B cell (primary cell): ENCODE measurements at regions of chr1 and their contacts with region 1.

Region 1: GRCh38 chr1:31789259-31790065 is 25.3 kb upstream of the ADGRB2 start:
- DNase-seq: peak; percentile 93
- ATAC-seq: peak; percentile 76
- H3K4me3 ChIP-seq: peak overlapping the region in 4 of 5 experiments; percentile 61 to 91 (median 76)
- H3K4me3 Mint-ChIP-seq: peak overlapping the region; percentile 96
- H3K27ac ChIP-seq: peak overlapping the region; percentile 73 to 88
- H3K27ac Mint-ChIP-seq: peak overlapping the region; percentile 98
- H3K4me1 ChIP-seq: peaks cover 26 to 34% of the 10 kb centered on the region in 2 donors
- H3K4me1 Mint-ChIP-seq: peaks cover 35% of the 10 kb centered on the region
- H3K27me3 ChIP-seq: peaks cover 0 to 3% (median 0%) of the 10 kb centered on the region in 4 experiments
- H3K27me3 Mint-ChIP-seq: peaks cover 3% of the 10 kb centered on the region
- CTCF ChIP-seq: peak; percentile 79

Region 2: DNA sequence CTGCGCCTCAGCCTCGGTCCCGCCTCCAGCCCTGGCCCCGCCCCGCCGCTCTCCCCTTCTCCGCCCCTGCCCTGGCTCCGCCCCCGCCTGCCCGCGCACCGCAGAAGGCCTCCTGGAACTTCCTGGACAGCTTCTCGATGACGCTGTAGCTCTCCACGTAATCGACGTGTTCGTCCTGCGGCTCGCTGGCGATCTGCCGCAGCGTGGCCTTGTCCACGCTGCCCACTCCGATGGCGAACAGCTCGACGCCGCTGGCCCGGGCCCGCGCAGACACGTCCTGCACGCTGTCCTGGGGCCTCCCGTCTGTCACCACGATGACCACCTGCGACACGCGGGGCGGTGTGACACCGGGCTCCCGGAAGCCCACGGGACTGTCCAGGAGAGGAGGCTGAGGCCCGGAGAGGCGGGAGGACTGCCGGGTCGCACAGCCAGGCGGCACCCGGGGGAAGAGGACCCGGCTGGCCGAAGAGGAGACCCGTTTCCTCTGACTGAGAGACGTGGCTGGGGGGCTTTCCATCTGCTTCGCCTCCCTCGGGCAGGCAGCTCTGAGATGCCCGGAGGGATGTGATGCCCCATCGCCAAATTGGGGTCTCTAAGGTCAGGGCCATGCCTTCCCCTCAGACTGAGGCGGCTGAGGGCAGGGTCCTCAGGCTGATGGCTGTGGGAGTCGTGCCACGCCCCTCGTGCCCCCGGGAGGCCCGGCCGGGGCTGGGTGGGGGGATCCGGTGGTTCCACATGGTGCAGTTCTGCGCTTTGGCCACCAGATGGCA is 1070.6 kb before region 1 on chr1:
- CTCF ChIA-PET with region 1: no interaction called
- POLR2A ChIA-PET with region 1: no interaction called
- intact Hi-C with region 1: loop called (anchors 5 kb)
- DNase-seq: peak; percentile 98
- ATAC-seq: peak; percentile 64
- H3K4me3 ChIP-seq: peak overlapping the region; percentile 7 to 96 (median 92)
- H3K4me3 Mint-ChIP-seq: peak overlapping the region; percentile 88
- H3K27ac ChIP-seq: peak overlapping the region; percentile 99 to 100
- H3K27ac Mint-ChIP-seq: peak overlapping the region; percentile 94
- H3K4me1 ChIP-seq: peaks cover 18 to 54% of the 10 kb centered on the region in 2 donors
- H3K4me1 Mint-ChIP-seq: peaks cover 44% of the 10 kb centered on the region
- H3K27me3 ChIP-seq: no peaks in the 10 kb centered on the region
- H3K27me3 Mint-ChIP-seq: no peaks in the 10 kb centered on the region
- CTCF ChIP-seq: no peak

Region 3: GRCh38 chr1:31531177-31531999 is 258.1 kb before region 1 on chr1:
- CTCF ChIA-PET with region 1: no interaction called
- POLR2A ChIA-PET with region 1: no interaction called
- intact Hi-C with region 1: no loop called
- DNase-seq: no peak
- ATAC-seq: no peak
- H3K4me3 ChIP-seq: no peak overlapping the region
- H3K4me3 Mint-ChIP-seq: no peak overlapping the region
- H3K27ac ChIP-seq: no peak overlapping the region
- H3K27ac Mint-ChIP-seq: no peak overlapping the region
- H3K4me1 ChIP-seq: peaks cover 0 to 2% of the 10 kb centered on the region in 2 donors
- H3K4me1 Mint-ChIP-seq: peaks cover 3% of the 10 kb centered on the region
- H3K27me3 ChIP-seq: peaks cover 0 to 7% (median 1%) of the 10 kb centered on the region in 4 experiments
- H3K27me3 Mint-ChIP-seq: peaks cover 25% of the 10 kb centered on the region
- CTCF ChIP-seq: no peak

Region 4: DNA sequence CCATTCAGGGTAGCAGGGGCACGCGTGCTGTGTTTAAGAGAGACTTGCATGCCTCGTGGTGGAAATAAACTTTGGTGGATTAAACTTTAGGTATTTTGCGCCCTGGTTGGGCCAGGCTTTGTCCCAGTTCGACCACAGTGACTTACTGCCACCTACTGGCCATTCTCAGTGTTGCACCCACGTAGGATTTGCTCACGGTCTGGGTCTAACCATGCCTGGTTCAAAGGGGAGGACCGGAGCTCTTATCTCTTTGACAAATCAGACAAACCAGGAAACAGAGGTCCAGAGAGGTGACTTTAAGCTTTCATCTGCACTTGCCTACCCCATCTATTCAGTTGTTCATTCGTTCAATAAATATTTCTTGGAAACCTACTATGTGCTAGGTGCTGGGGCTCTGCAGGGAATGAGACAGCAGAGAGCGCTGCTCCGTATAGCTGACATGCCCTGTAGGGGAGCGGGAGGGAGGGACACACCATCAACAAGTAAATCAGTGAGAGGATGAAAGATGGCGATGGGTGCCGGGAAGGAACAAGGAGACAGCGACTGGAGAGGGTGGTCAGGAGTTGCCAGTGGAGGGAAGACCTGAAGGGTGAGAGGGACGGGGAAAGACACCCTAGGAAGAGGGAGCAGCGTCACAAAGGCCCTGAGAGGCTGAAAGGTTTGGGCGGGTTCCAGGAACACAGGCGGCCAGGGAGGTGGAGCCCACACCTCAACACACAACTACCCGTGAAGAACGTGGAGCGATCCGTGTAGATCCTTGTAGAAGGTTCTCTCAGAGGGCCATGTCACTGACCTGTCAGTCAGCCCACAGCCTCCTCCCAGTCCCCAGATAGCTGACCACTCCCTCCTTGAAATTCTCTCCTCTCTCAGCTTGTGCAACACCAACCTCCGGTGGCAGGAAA is 240.3 kb before region 1 on chr1:
- CTCF ChIA-PET with region 1: interaction called, 19 read pairs
- POLR2A ChIA-PET with region 1: no interaction called
- intact Hi-C with region 1: no loop called
- DNase-seq: peak; percentile 89
- ATAC-seq: peak; percentile 98
- H3K4me3 ChIP-seq: no peak overlapping the region
- H3K4me3 Mint-ChIP-seq: peak overlapping the region; percentile 29
- H3K27ac ChIP-seq: no peak overlapping the region
- H3K27ac Mint-ChIP-seq: no peak overlapping the region
- H3K4me1 ChIP-seq: peaks cover 6 to 11% of the 10 kb centered on the region in 2 donors
- H3K4me1 Mint-ChIP-seq: peaks cover 10% of the 10 kb centered on the region
- H3K27me3 ChIP-seq: peaks cover 0 to 6% (median 2%) of the 10 kb centered on the region in 4 experiments
- H3K27me3 Mint-ChIP-seq: peaks cover 11% of the 10 kb centered on the region
- CTCF ChIP-seq: peak; percentile 94

Region 5: DNA sequence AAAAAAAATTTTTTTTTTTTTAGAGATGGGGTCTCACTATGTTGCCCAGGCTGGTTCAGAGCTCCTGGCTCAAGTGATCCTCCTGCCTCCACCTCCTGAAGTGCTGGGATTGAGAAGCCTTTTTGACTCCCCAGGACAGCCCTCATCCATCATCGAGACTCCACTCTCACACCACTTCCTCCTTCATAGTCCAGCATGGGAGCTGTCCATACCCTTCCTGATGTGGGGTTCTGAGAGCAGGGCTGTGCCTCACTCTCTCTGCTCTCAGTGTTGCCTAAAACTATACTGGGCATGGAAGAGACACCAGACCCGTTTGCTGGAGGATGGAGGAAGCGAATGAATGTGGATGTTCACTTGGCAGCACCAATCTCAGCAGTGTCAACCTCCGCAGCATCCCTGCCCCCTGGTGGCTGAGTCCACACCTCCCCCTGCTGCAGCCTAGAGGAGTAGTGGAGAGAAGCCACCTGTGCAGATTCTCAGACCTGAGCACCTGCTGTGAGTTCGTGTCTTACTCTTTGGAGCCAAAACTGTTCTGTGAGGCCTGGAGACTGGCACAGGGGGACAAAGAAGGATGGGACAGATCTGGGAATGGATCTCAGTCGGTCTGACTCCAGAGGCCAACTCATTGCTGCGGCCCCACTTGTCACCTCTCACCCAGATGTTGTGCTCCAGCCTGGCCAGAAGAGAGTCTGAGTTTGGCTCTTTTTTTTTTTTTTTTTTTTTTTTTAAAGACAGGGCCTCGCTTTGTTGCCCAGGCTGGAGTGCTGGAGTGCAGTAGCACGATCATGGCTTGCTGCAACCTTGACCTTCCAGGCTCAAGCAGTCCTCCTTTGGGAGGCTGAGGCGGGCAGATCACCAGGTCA is 195.5 kb before region 1 on chr1:
- CTCF ChIA-PET with region 1: no interaction called
- POLR2A ChIA-PET with region 1: no interaction called
- intact Hi-C with region 1: no loop called
- DNase-seq: peak; percentile 75
- ATAC-seq: peak; percentile 81
- H3K4me3 ChIP-seq: no peak overlapping the region
- H3K4me3 Mint-ChIP-seq: no peak overlapping the region
- H3K27ac ChIP-seq: no peak overlapping the region
- H3K27ac Mint-ChIP-seq: no peak overlapping the region
- H3K4me1 ChIP-seq: no peaks in the 10 kb centered on the region
- H3K4me1 Mint-ChIP-seq: peaks cover 11% of the 10 kb centered on the region
- H3K27me3 ChIP-seq: peaks cover 0 to 12% (median 2%) of the 10 kb centered on the region in 4 experiments
- H3K27me3 Mint-ChIP-seq: peaks cover 28% of the 10 kb centered on the region
- CTCF ChIP-seq: peak; percentile 65

Region 6: GRCh38 chr1:31663622-31664452 is 125.6 kb before region 1 on chr1:
- CTCF ChIA-PET with region 1: interaction called, 184 read pairs
- POLR2A ChIA-PET with region 1: interaction called, 7 read pairs
- intact Hi-C with region 1: no loop called
- DNase-seq: peak; percentile 73
- ATAC-seq: peak; percentile 85
- H3K4me3 ChIP-seq: no peak overlapping the region
- H3K4me3 Mint-ChIP-seq: no peak overlapping the region
- H3K27ac ChIP-seq: no peak overlapping the region
- H3K27ac Mint-ChIP-seq: no peak overlapping the region
- H3K4me1 ChIP-seq: no peaks in the 10 kb centered on the region
- H3K4me1 Mint-ChIP-seq: no peaks in the 10 kb centered on the region
- H3K27me3 ChIP-seq: peaks cover 0 to 6% (median 0%) of the 10 kb centered on the region in 4 experiments
- H3K27me3 Mint-ChIP-seq: peaks cover 5% of the 10 kb centered on the region
- CTCF ChIP-seq: peak; percentile 86

Region 7: GRCh38 chr1:31762726-31763670 is 26.5 kb before region 1 on chr1:
- CTCF ChIA-PET with region 1: interaction called, 199 read pairs
- POLR2A ChIA-PET with region 1: interaction called, 28 read pairs
- intact Hi-C with region 1: loop called (anchors 1 kb)
- DNase-seq: peak; percentile 83
- ATAC-seq: peak; percentile 56
- H3K4me3 ChIP-seq: peak overlapping the region in 4 of 5 experiments; percentile 33 to 61 (median 50)
- H3K4me3 Mint-ChIP-seq: peak overlapping the region; percentile 83
- H3K27ac ChIP-seq: no peak overlapping the region
- H3K27ac Mint-ChIP-seq: peak overlapping the region; percentile 15
- H3K4me1 ChIP-seq: peaks cover 35 to 42% of the 10 kb centered on the region in 2 donors
- H3K4me1 Mint-ChIP-seq: peaks cover 34% of the 10 kb centered on the region
- H3K27me3 ChIP-seq: peaks cover 0 to 31% (median 15%) of the 10 kb centered on the region in 4 experiments
- H3K27me3 Mint-ChIP-seq: peaks cover 13% of the 10 kb centered on the region
- CTCF ChIP-seq: peak; percentile 80

Region 8: GRCh38 chr1:31938174-31938950 is 148.9 kb after region 1 on chr1 and contains the start of gene PTP4A2:
- CTCF ChIA-PET with region 1: interaction called, 12 read pairs
- POLR2A ChIA-PET with region 1: interaction called, 8 read pairs
- intact Hi-C with region 1: loop called (anchors 10 kb)
- DNase-seq: peak; percentile 95
- ATAC-seq: peak; percentile 82
- H3K4me3 ChIP-seq: peak within 1 kb of the TSS; percentile 59 to 97 (median 78)
- H3K4me3 Mint-ChIP-seq: peak within 1 kb of the TSS; percentile 91
- H3K27ac ChIP-seq: peak within 1 kb of the TSS; percentile 78 to 86
- H3K27ac Mint-ChIP-seq: peak within 1 kb of the TSS; percentile 95
- H3K4me1 ChIP-seq: peaks cover 73 to 76% of the 10 kb centered on the region in 2 donors
- H3K4me1 Mint-ChIP-seq: peaks cover 67% of the 10 kb centered on the region
- H3K27me3 ChIP-seq: no peaks in the 10 kb centered on the region
- H3K27me3 Mint-ChIP-seq: no peaks in the 10 kb centered on the region
- CTCF ChIP-seq: peak; percentile 63
- total RNA-seq, gene PTP4A2: 184 and 193 TPM in 2 replicates

Region 9: DNA sequence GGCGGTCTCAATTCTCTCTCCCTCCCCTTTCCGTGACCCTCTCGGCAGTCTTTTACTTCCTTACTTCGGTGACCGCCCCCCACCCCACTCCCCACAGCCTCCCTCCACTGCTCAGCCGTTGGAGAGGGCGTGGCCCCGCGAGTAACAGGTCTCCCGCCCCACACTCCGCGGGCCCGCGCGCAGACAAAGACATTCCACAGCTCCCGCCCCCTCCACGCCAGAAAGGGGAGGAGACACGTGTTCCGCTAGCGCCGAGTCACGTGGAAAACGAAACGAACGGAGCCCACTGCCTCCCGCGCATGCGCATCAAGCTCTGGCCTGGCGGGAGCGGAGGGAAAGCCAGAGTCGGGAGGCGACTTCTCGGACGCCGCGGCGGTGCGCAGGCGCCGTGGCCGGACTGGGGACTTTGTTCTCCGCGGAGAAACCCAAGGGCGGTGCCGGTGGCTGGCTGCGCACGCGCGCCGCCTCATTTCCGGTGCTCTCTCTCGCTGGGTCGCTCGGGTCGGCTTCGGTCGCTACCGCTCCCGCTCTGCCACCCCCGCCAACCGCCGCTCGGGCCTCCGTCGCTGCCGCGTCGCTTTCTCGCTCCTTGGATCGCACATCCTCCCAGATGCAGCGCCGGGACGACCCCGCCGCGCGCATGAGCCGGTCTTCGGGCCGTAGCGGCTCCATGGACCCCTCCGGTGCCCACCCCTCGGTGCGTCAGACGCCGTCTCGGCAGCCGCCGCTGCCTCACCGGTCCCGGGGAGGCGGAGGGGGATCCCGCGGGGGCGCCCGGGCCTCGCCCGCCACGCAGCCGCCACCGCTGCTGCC is 224.1 kb after region 1 on chr1 and contains the start of gene KHDRBS1:
- CTCF ChIA-PET with region 1: no interaction called
- POLR2A ChIA-PET with region 1: no interaction called
- intact Hi-C with region 1: loop called (anchors 1 kb)
- DNase-seq: peak; percentile 99
- ATAC-seq: peak; percentile 86
- H3K4me3 ChIP-seq: peak within 1 kb of the TSS; percentile 60 to 96 (median 85)
- H3K4me3 Mint-ChIP-seq: peak within 1 kb of the TSS; percentile 99
- H3K27ac ChIP-seq: peak within 1 kb of the TSS; percentile 89 to 96
- H3K27ac Mint-ChIP-seq: peak within 1 kb of the TSS; percentile 99
- H3K4me1 ChIP-seq: peaks cover 20 to 33% of the 10 kb centered on the region in 2 donors
- H3K4me1 Mint-ChIP-seq: peaks cover 31% of the 10 kb centered on the region
- H3K27me3 ChIP-seq: no peaks in the 10 kb centered on the region
- H3K27me3 Mint-ChIP-seq: no peaks in the 10 kb centered on the region
- CTCF ChIP-seq: no peak
- total RNA-seq, gene KHDRBS1: 99.0 and 101 TPM in 2 replicates